PC-9 (cell line): ENCODE measurements at regions of chr18 and their contacts with region 1.

Region 1: DNA sequence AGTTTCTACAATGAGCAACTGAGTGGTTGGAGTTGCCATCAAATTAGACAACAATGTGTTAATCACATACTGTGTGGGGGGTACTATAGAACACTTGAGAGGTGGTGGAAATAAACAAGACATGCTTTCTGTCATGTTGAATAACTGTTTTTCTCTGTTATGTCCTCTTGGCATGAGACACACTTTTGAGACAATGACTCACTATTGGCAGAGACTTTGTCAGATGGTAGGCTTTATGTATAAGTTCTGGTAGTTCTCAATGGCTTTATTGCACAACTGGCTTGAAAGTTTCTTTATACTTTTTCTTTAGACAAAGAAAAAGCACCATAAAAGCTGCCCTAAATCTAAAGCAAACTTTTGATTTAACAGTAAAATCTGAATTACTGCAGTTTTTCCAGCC is 578.7 kb downstream of the ADCYAP1 start:
- DNase-seq: no peak
- H3K4me3 ChIP-seq: no peak overlapping the region
- H3K27ac ChIP-seq: no peak overlapping the region
- H3K4me1 ChIP-seq: no peaks in the 10 kb centered on the region
- H3K27me3 ChIP-seq: no peaks in the 10 kb centered on the region
- CTCF ChIP-seq: no peak

Region 2: DNA sequence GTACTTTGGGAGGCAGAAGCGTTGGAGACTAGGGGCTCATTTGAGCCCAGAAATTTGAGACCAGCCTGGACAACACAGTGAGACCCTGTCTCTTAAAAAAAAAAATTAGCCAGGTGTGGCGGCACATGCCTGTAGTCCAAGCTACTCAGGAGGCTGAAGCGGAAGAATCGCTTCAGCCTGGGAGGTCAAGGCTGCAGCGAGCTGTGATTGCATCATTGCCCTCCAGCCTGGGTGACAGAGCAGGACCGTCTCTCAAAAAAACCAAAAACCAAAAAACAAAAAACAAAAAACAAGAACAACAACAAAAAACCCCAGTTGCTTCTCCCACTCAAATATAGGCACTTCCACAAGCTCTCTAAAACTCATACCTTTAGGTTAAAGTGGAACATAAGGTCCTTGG is 606.1 kb before region 1 on chr18:
- CTCF ChIA-PET with region 1: no interaction called
- POLR2A ChIA-PET with region 1: no interaction called
- intact Hi-C with region 1: loop called (anchors 10 kb)
- DNase-seq: no peak
- H3K4me3 ChIP-seq: no peak overlapping the region
- H3K27ac ChIP-seq: no peak overlapping the region
- H3K4me1 ChIP-seq: no peaks in the 10 kb centered on the region
- H3K27me3 ChIP-seq: peaks cover 1% of the 10 kb centered on the region; the same call in 1 of the 2 replicates
- CTCF ChIP-seq: no peak

Region 3: GRCh38 chr18:1464444-1465217 is 18.8 kb before region 1 on chr18:
- CTCF ChIA-PET with region 1: no interaction called
- POLR2A ChIA-PET with region 1: no interaction called
- intact Hi-C with region 1: no loop called
- DNase-seq: no peak
- H3K4me3 ChIP-seq: no peak overlapping the region
- H3K27ac ChIP-seq: no peak overlapping the region
- H3K4me1 ChIP-seq: no peaks in the 10 kb centered on the region
- H3K27me3 ChIP-seq: no peaks in the 10 kb centered on the region
- CTCF ChIP-seq: no peak

Region 4: DNA sequence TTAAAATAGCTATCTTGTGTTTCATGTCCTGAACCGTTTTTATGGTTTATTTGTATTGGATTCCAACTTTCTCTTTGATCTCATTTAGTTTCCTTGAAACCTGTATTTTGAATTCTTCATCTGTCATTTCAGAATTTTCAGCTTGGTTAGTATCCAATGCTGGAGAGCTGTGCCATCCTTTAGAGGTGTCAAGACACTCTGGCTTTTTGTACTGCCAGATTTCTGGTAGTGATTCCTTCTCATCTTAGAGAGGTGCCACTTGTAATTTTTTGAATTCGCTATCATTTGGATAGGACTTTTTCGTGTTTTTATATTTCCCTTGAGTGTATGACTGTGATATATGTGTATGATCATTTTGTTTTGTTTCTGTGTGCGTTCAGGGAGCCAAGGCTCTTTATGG is 12.7 kb after region 1 on chr18:
- CTCF ChIA-PET with region 1: no interaction called
- POLR2A ChIA-PET with region 1: interaction called, 11 read pairs
- intact Hi-C with region 1: no loop called
- DNase-seq: no peak
- H3K4me3 ChIP-seq: no peak overlapping the region
- H3K27ac ChIP-seq: no peak overlapping the region
- H3K4me1 ChIP-seq: no peaks in the 10 kb centered on the region
- H3K27me3 ChIP-seq: no peaks in the 10 kb centered on the region
- CTCF ChIP-seq: no peak